Natural killer cell (primary cell): ENCODE measurements at regions of chr5 and their contacts with region 1.

Region 1: DNA sequence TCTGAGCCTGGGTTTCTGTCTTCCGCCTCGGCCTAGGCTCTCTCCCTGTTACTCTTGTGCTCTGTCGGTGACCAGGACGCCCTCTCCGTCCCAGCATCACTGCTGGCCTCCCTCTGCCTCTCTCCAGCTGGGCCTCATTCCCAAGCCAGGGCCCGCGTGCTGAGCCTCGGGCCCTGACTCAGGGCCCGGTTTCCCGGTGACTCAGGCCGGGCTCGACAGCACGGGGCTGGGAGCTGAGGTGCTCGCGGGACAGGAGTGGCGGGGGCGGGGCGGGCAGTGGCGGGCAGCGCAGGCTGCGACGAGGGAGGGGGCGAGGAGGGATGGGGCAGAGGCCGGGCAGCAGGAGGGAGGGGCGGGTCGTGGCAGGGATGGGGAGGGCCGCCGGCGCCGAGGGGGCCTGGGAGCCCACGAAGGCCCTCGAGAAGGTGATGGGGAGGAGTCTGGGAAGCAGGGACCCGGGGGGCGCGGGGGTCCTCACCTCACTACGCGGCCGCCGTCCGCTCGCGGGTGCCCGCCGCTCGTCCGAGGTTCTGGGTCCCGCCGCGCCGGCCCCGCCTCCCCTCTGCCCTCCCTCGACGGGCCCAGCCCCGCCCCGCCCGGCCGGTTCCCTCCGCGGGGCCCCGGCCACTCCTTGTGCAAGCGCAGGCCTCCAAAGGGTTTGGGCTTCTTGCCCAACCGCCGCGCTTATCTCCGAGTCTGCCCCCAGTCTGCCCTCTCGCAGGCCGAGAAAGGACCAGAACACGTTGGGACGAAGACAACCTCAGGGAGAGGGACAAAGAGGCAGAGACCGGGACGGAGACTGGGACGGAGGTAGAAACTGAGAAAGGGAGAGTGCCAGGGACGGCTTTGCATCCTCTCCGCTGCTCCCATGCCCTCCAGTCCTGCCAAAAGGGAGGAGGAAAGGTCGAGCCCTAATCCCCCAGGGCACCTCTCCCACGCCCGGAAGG is at the start of gene ARAP3:
- DNase-seq: peak; percentile 49 to 51
- ATAC-seq: peak; percentile 74 to 83 (median 75)
- H3K4me3 ChIP-seq: peak within 1 kb of the TSS; percentile 57
- H3K4me3 Mint-ChIP-seq: peak within 1 kb of the TSS; percentile 95
- H3K27ac ChIP-seq: peak within 1 kb of the TSS; percentile 51
- H3K27ac Mint-ChIP-seq: peak within 1 kb of the TSS; percentile 76 to 81
- H3K4me1 ChIP-seq: peaks cover 36% of the 10 kb centered on the region
- H3K4me1 Mint-ChIP-seq: peaks cover 22 to 50% of the 10 kb centered on the region in 2 donors
- H3K27me3 ChIP-seq: no peaks in the 10 kb centered on the region
- H3K27me3 Mint-ChIP-seq: no peaks in the 10 kb centered on the region
- CTCF ChIP-seq: no peak
- total RNA-seq, gene ARAP3: 13.9 to 25.2 (median 19.6) TPM

Region 2: GRCh38 chr5:141650851-141651727 is 30.9 kb before region 1 on chr5 and contains the start of gene FCHSD1:
- intact Hi-C with region 1: loop called (anchors 1 kb)
- DNase-seq: peak; percentile 82 to 86
- ATAC-seq: peak; percentile 98
- H3K4me3 ChIP-seq: peak within 1 kb of the TSS; percentile 64
- H3K4me3 Mint-ChIP-seq: peak within 1 kb of the TSS; percentile 95
- H3K27ac ChIP-seq: peak within 1 kb of the TSS; percentile 73
- H3K27ac Mint-ChIP-seq: peak within 1 kb of the TSS; percentile 74 to 95
- H3K4me1 ChIP-seq: peaks cover 18% of the 10 kb centered on the region
- H3K4me1 Mint-ChIP-seq: peaks cover 34 to 41% of the 10 kb centered on the region in 2 donors
- H3K27me3 ChIP-seq: no peaks in the 10 kb centered on the region
- H3K27me3 Mint-ChIP-seq: no peaks in the 10 kb centered on the region
- CTCF ChIP-seq: no peak
- total RNA-seq, gene FCHSD1: 134 to 155 (median 147) TPM

Region 3: GRCh38 chr5:142032747-142033631 is 351.0 kb after region 1 on chr5:
- intact Hi-C with region 1: no loop called
- DNase-seq: no peak
- ATAC-seq: no peak
- H3K4me3 ChIP-seq: no peak overlapping the region
- H3K4me3 Mint-ChIP-seq: no peak overlapping the region
- H3K27ac ChIP-seq: no peak overlapping the region
- H3K27ac Mint-ChIP-seq: no peak overlapping the region
- H3K4me1 ChIP-seq: no peaks in the 10 kb centered on the region
- H3K4me1 Mint-ChIP-seq: no peaks in the 10 kb centered on the region
- H3K27me3 ChIP-seq: no peaks in the 10 kb centered on the region
- H3K27me3 Mint-ChIP-seq: peaks cover 11 to 48% of the 10 kb centered on the region in 2 donors
- CTCF ChIP-seq: no peak